Mammary epithelial cell (primary cell): ENCODE measurements at regions of chr10 and their contacts with region 1.

Region 1: DNA sequence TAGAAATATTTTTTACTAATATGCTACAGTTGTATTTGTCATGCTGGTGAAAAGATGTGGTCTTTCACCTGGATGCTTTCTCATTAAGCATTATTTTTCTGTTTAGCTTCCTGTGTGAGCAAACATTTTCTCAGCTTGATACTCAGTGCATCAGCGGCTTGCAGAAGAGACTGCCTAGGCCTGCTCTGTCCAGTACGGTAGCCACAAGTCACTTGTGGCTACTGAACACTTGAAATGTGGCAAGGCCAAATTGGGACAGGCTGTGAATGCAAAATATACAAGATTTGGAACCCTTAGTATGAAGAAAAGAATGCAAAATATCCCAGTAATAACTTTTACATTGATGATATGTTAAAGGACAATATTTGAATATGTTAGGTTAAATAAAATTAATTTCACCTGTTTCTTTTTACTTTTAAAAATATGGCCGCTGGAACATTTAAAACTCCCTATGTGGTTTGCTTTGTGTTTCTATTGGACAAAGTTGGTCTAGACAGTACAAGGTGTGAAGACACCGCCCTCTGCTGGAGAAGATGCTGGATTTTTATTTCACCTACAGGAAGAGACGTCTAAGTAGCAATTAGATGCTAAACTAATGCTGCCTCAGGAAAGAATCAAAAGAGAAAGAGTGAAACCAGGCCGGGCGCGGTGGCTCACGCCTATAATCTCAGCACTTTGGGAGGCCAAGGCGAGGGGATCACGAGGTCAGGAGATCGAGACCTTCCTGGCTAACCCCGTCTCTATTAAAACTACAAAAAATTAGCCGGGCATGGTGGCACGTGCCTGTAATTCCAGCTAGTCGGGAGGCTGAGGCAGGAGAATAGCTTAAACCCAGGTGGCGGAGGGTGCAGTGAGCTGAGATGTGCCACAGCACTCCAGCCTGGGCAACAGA is 5.3 kb downstream of the SRGN start:
- DNase-seq: peak; percentile 77
- H3K4me3 ChIP-seq: no peak overlapping the region
- H3K27ac ChIP-seq: no peak overlapping the region
- H3K4me1 ChIP-seq: no peaks in the 10 kb centered on the region
- H3K27me3 ChIP-seq: no peaks in the 10 kb centered on the region
- CTCF ChIP-seq: peak; percentile 57 to 77

Region 2: DNA sequence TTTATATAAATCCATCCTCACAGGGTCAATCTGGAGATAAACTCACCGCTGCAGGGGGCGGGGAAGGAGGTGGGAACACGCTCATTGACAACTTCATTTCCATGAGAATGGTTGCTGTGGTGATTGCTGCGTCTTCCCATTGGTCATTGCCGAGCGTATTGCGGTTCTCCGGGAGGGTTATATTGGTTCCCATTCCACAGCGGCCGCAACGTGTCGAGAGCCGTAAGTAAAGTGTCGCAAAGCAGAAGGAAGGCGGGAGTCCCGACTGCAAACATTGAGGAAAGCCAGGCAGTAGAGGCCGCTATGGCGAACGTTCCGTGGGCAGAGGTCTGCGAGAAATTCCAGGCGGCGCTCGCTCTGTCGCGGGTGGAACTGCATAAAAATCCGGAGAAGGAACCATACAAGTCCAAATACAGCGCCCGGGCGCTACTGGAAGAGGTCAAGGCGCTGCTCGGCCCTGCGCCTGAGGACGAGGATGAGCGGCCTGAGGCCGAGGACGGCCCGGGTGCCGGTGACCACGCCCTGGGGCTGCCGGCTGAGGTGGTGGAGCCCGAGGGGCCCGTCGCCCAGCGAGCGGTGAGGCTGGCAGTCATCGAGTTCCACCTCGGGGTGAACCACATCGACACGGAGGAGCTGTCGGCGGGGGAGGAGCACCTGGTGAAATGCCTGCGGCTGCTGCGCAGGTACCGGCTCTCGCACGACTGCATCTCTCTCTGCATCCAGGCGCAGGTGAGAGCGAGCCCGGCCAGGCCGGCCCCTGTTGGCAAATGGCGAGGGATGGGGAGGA is 104.5 kb before region 1 on chr10 and contains the start of gene KIFBP:
- CTCF ChIA-PET with region 1: no interaction called
- dilution Hi-C with region 1: no loop called
- in situ Hi-C with region 1: no loop called
- intact Hi-C with region 1: loop called (anchors 1 kb)
- DNase-seq: peak; percentile 96
- H3K4me3 ChIP-seq: peak within 1 kb of the TSS; percentile 70 to 83 (median 79)
- H3K27ac ChIP-seq: peak within 1 kb of the TSS; percentile 73
- H3K4me1 ChIP-seq: peaks cover 28% of the 10 kb centered on the region
- H3K27me3 ChIP-seq: no peaks in the 10 kb centered on the region
- CTCF ChIP-seq: peak; percentile 16 to 64
- total RNA-seq, gene KIFBP: 36.0 to 39.3 TPM

Region 3: DNA sequence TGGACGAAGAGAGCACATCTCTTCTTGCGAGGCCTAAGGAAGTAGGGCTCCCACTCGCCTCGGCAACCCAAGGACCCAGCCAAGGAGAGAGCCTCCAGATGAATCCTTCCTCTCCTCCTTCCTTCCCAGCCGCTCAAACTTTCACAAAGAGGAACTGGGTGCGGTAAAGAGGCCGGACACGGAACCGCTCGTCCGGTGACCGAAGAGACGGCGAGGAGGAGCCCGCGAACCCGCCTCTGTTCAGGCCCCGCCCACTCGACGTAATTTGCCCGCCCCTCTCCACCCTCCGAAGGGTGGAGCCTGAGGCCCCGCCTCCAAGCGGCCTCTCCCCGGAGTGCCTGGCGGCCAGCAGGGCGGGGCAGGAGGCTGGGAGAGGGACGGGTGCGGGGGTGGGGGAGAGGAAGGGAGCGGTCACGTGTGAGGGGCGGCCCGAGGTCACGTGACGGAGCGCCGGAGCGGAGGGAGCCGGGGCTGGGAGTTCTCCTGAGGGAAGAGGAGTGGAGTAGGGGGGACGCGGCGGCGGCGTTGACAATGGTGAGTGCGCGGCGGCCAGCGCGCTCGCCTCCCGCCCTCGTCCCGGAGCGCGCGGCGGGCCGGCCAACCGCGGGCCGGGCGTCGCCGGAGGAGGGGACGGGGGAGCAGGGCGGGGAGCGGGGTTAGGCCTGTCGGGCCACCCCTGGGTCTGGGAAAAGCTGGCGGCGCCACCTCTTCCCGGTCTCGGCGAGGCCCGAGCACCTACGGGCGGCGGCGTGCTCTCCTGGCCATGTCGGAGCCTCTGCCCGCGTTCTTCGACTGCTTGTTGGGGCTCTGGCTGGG is 30.8 kb after region 1 on chr10 and contains the start of gene VPS26A:
- CTCF ChIA-PET with region 1: interaction called, 34 read pairs
- dilution Hi-C with region 1: no loop called
- in situ Hi-C with region 1: no loop called
- intact Hi-C with region 1: loop called (anchors 1 kb)
- DNase-seq: peak; percentile 99
- H3K4me3 ChIP-seq: peak within 1 kb of the TSS; percentile 81 to 96 (median 83)
- H3K27ac ChIP-seq: peak within 1 kb of the TSS; percentile 96
- H3K4me1 ChIP-seq: peaks cover 4% of the 10 kb centered on the region
- H3K27me3 ChIP-seq: no peaks in the 10 kb centered on the region
- CTCF ChIP-seq: no peak
- total RNA-seq, gene VPS26A: 30.3 to 75.8 TPM

Region 4: DNA sequence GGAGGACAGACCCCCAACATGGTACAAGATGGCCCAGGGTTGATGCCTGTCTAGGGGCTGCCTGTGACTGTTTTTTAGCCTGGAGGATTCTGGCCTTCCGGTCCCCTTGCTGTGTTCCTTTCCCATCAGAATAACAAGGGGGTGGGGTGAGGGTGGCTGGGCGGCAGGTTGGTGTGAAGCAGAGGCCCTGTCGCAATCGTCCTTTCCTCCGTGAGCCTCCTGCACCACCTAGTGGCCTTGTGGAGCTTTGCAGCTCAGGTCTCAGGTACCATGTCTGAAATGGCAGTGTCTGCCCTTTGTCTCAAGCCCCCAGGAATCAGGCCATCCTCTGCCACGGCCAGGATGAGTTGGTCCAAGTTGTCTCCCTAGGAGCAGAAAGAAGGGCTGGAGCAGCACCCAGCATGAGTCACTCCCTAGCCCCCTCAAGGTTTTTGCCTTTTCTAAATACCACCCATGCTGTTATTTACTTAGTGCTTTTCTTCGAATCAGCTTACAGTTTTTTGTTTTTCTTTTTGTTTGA is 299.3 kb after region 1 on chr10:
- CTCF ChIA-PET with region 1: no interaction called
- dilution Hi-C with region 1: no loop called
- in situ Hi-C with region 1: no loop called
- intact Hi-C with region 1: loop called (anchors 5 kb)
- DNase-seq: peak; percentile 66
- H3K4me3 ChIP-seq: no peak overlapping the region
- H3K27ac ChIP-seq: no peak overlapping the region
- H3K4me1 ChIP-seq: peaks cover 6% of the 10 kb centered on the region
- H3K27me3 ChIP-seq: no peaks in the 10 kb centered on the region
- CTCF ChIP-seq: peak; percentile 92 to 99

Region 5: GRCh38 chr10:70115948-70116682 is 1022.9 kb after region 1 on chr10:
- CTCF ChIA-PET with region 1: no interaction called
- dilution Hi-C with region 1: no loop called
- in situ Hi-C with region 1: no loop called
- intact Hi-C with region 1: no loop called
- DNase-seq: peak; percentile 25
- H3K4me3 ChIP-seq: no peak overlapping the region
- H3K27ac ChIP-seq: no peak overlapping the region
- H3K4me1 ChIP-seq: no peaks in the 10 kb centered on the region
- H3K27me3 ChIP-seq: no peaks in the 10 kb centered on the region
- CTCF ChIP-seq: peak; percentile 83 to 84